Transverse colon (tissue), 4 donors: ENCODE measurements at regions of chr11 and their contacts with region 1.

Region 1: DNA sequence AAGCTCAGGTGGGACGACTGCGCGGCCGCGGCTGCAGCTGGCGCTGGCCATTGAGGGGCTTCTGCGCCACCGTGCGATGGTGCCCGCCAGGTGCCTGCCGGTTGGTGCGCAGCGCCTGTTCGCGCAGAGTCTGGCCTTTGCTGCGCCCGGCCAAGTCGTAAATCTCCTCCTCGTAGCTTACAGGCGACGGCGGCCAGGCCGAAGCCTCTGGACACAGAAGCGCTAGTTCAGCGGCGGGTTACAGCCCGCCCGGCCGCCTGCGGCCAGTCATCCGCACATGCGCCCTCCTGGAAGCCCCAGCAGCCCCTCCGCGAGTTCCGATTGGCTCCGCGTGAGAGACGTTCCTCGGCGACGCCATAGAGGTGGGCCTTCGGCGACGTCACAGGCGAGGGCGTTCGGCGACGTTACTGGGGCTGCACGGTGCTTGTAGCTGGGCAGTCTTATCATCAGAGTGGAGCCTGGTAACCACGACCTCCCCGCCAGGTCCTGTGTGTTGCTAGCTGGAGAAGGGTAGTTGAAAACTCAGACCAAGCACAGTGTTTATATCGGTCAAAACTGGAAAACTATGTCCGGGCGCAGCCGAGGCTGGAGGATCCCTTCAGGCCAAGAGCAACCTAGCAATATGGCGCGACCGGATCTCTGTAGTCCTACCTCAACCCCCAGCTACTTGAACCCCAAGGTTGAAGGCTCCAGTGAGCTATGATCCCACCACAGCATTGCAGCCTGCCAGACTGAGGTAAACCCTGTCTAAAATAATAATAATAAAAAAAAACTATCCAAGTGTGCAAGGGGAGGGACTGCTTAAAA is 265.7 kb downstream of the OR4C45 start:
- DNase-seq: no peak
- H3K4me3 ChIP-seq: no peak overlapping the region
- H3K27ac ChIP-seq: no peak overlapping the region
- H3K4me1 ChIP-seq: no peaks in the 10 kb centered on the region
- H3K27me3 ChIP-seq: no peaks in the 10 kb centered on the region
- CTCF ChIP-seq: no peak
- EP300 ChIP-seq: no peak
- POLR2A ChIP-seq: no peak

Region 2: GRCh38 chr11:49851971-49852389 is 446.4 kb before region 1 on chr11:
- in situ Hi-C with region 1: no loop called
- intact Hi-C with region 1: no loop called
- DNase-seq: no peak
- H3K4me3 ChIP-seq: no peak overlapping the region
- H3K27ac ChIP-seq: no peak overlapping the region
- H3K4me1 ChIP-seq: no peaks in the 10 kb centered on the region
- H3K27me3 ChIP-seq: no peaks in the 10 kb centered on the region
- CTCF ChIP-seq: no peak
- EP300 ChIP-seq: no peak
- POLR2A ChIP-seq: no peak

Region 3: DNA sequence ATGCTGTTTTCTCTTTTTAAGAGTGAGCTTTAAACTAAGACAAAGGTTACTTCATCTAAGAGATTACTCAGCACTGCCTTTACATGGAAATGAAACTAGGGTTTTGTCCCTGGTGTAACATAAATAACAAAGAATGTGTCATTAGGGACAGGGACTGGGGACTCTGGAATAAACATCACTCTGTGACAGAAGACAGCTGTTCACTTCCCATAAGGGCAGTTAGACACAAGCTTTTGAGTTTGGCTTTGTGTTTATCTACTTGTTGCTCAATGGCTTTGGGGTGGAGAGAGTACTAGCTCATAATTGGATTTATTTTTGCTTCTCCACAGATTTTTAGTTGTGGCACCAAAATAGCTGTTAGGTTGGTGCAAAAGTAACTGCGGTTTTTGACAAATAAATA is 111.2 kb before region 1 on chr11:
- in situ Hi-C with region 1: no loop called
- intact Hi-C with region 1: no loop called
- DNase-seq: no peak
- H3K4me3 ChIP-seq: no peak overlapping the region
- H3K27ac ChIP-seq: no peak overlapping the region
- H3K4me1 ChIP-seq: no peaks in the 10 kb centered on the region
- H3K27me3 ChIP-seq: no peaks in the 10 kb centered on the region
- CTCF ChIP-seq: no peak
- EP300 ChIP-seq: no peak
- POLR2A ChIP-seq: no peak

Region 4: GRCh38 chr11:50214376-50214775 is 84.0 kb before region 1 on chr11:
- in situ Hi-C with region 1: loop called in 1 of 4 experiments (anchors 25 kb)
- intact Hi-C with region 1: no loop called
- DNase-seq: no peak
- H3K4me3 ChIP-seq: no peak overlapping the region
- H3K27ac ChIP-seq: no peak overlapping the region
- H3K4me1 ChIP-seq: no peaks in the 10 kb centered on the region
- H3K27me3 ChIP-seq: no peaks in the 10 kb centered on the region
- CTCF ChIP-seq: no peak
- EP300 ChIP-seq: no peak
- POLR2A ChIP-seq: no peak

Region 5: GRCh38 chr11:50247309-50247874 is 51.0 kb before region 1 on chr11:
- in situ Hi-C with region 1: no loop called
- intact Hi-C with region 1: no loop called
- DNase-seq: no peak
- H3K4me3 ChIP-seq: no peak overlapping the region
- H3K27ac ChIP-seq: no peak overlapping the region
- H3K4me1 ChIP-seq: no peaks in the 10 kb centered on the region
- H3K27me3 ChIP-seq: no peaks in the 10 kb centered on the region
- CTCF ChIP-seq: no peak
- EP300 ChIP-seq: no peak
- POLR2A ChIP-seq: no peak

Region 6: GRCh38 chr11:50267851-50268250 is 30.5 kb before region 1 on chr11:
- in situ Hi-C with region 1: no loop called
- intact Hi-C with region 1: no loop called
- DNase-seq: no peak
- H3K4me3 ChIP-seq: no peak overlapping the region
- H3K27ac ChIP-seq: no peak overlapping the region
- H3K4me1 ChIP-seq: no peaks in the 10 kb centered on the region
- H3K27me3 ChIP-seq: no peaks in the 10 kb centered on the region
- CTCF ChIP-seq: no peak
- EP300 ChIP-seq: no peak
- POLR2A ChIP-seq: no peak